ENCODE measurements at regions of chr1 and their contacts with region 1.

Region 1: GRCh38 chr1:202968840-202969295 is 1.8 kb upstream of the CYB5R1 start:
- DNase-seq: peak in 8 of 14 experiments; percentile 5 to 78 (median 24)
- ATAC-seq: peak; percentile 45
- H3K4me3 ChIP-seq: no peak overlapping the region
- H3K4me3 Mint-ChIP-seq: peak overlapping the region; percentile 94
- H3K27ac ChIP-seq: no peak overlapping the region
- H3K27ac Mint-ChIP-seq: peak overlapping the region; percentile 90
- H3K4me1 ChIP-seq: peaks cover 36% of the 10 kb centered on the region
- H3K4me1 Mint-ChIP-seq: peaks cover 27% of the 10 kb centered on the region
- H3K27me3 ChIP-seq: no peaks in the 10 kb centered on the region
- H3K27me3 Mint-ChIP-seq: no peaks in the 10 kb centered on the region
- CTCF ChIP-seq: peak; percentile 47

Region 2: GRCh38 chr1:202810615-202811295 is 158.1 kb before region 1 on chr1 and contains the start of gene PCAT6:
- CTCF ChIA-PET with region 1: no interaction called
- POLR2A ChIA-PET with region 1: no interaction called
- intact Hi-C with region 1: loop called in 1 of 2 experiments (anchors 2 kb)
- DNase-seq: peak; percentile 67 to 93 (median 81)
- ATAC-seq: peak; percentile 67
- H3K4me3 ChIP-seq: peak within 1 kb of the TSS; percentile 96
- H3K4me3 Mint-ChIP-seq: peak within 1 kb of the TSS; percentile 90
- H3K27ac ChIP-seq: peak within 1 kb of the TSS in 1 of 2 donors; percentile 35
- H3K27ac Mint-ChIP-seq: peak within 1 kb of the TSS; percentile 80
- H3K4me1 ChIP-seq: peaks cover 33% of the 10 kb centered on the region
- H3K4me1 Mint-ChIP-seq: peaks cover 38% of the 10 kb centered on the region
- H3K27me3 ChIP-seq: no peaks in the 10 kb centered on the region
- H3K27me3 Mint-ChIP-seq: no peaks in the 10 kb centered on the region
- CTCF ChIP-seq: no peak
- total RNA-seq, gene PCAT6: 0.91 to 1.3 TPM

Region 3: GRCh38 chr1:202871366-202871765 is 97.5 kb before region 1 on chr1:
- CTCF ChIA-PET with region 1: no interaction called
- POLR2A ChIA-PET with region 1: no interaction called
- intact Hi-C with region 1: no loop called
- DNase-seq: no peak
- ATAC-seq: no peak
- H3K4me3 ChIP-seq: no peak overlapping the region
- H3K4me3 Mint-ChIP-seq: no peak overlapping the region
- H3K27ac ChIP-seq: no peak overlapping the region
- H3K27ac Mint-ChIP-seq: no peak overlapping the region
- H3K4me1 ChIP-seq: no peaks in the 10 kb centered on the region
- H3K4me1 Mint-ChIP-seq: no peaks in the 10 kb centered on the region
- H3K27me3 ChIP-seq: peaks cover 0 to 1% of the 10 kb centered on the region in 2 experiments
- H3K27me3 Mint-ChIP-seq: peaks cover 15% of the 10 kb centered on the region
- CTCF ChIP-seq: no peak

Region 4: DNA sequence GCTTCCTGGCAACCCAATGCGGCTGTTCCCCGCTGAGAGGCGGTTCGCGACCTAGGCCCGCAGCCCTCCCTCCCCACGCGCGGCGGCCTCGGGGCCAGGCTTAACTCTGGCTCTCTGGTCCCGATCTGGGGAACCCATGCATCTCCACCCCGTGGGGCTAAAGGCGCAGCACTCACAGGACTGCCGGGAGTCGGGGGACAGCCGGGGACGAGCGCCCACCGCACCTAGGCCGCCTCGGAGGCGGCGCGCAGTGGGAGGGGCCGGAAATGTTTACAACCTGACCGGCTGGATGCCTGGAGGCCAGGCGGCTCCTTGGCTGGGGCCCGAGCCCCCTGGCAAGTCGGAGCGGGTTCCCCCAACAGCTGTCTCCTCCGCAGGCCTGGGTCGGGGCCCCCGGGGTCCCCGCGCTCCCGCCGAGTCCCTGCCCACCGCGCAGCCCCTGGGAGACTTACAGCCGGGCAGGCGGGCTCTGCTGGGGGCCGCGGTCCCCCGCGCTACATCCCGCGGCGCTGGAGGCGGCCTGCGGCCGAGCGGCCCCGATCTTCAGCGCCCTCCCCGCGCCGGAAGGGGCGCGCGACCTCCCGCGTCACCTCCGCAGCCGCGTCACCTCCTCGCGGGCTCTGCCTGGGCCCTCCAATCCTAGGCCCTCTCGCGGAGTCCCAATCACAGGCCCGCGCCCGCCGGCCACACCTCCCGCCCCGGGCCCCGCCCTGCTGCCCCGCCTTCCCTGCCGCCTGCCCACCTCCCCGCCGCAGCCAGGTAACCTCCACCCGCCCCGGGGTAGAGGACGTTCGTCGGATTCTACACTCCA is 10.9 kb before region 1 on chr1 and contains the start of gene ADIPOR1:
- CTCF ChIA-PET with region 1: interaction called, 4 read pairs
- POLR2A ChIA-PET with region 1: interaction called, 6 read pairs
- intact Hi-C with region 1: loop called in 1 of 2 experiments (anchors 1 kb)
- DNase-seq: peak; percentile 88 to 97 (median 95)
- ATAC-seq: peak; percentile 96
- H3K4me3 ChIP-seq: peak within 1 kb of the TSS; percentile 98
- H3K4me3 Mint-ChIP-seq: peak within 1 kb of the TSS; percentile 98
- H3K27ac ChIP-seq: peak within 1 kb of the TSS; percentile 81
- H3K27ac Mint-ChIP-seq: peak within 1 kb of the TSS; percentile 95
- H3K4me1 ChIP-seq: peaks cover 38% of the 10 kb centered on the region
- H3K4me1 Mint-ChIP-seq: peaks cover 55% of the 10 kb centered on the region
- H3K27me3 ChIP-seq: no peaks in the 10 kb centered on the region
- H3K27me3 Mint-ChIP-seq: no peaks in the 10 kb centered on the region
- CTCF ChIP-seq: peak; percentile 22
- total RNA-seq, gene ADIPOR1: 91.5 to 95.6 TPM

Region 5: GRCh38 chr1:203006948-203007871 is 38.3 kb after region 1 on chr1 and contains the start of gene TMEM183A:
- CTCF ChIA-PET with region 1: interaction called, 3 read pairs
- POLR2A ChIA-PET with region 1: interaction called, 14 read pairs
- intact Hi-C with region 1: loop called in 1 of 2 experiments (anchors 2 kb)
- DNase-seq: peak; percentile 88 to 98 (median 92)
- ATAC-seq: peak; percentile 94
- H3K4me3 ChIP-seq: peak within 1 kb of the TSS; percentile 71
- H3K4me3 Mint-ChIP-seq: peak within 1 kb of the TSS; percentile 99
- H3K27ac ChIP-seq: peak within 1 kb of the TSS; percentile 71 to 96
- H3K27ac Mint-ChIP-seq: peak within 1 kb of the TSS; percentile 95
- H3K4me1 ChIP-seq: peaks cover 19% of the 10 kb centered on the region
- H3K4me1 Mint-ChIP-seq: peaks cover 35% of the 10 kb centered on the region
- H3K27me3 ChIP-seq: no peaks in the 10 kb centered on the region
- H3K27me3 Mint-ChIP-seq: no peaks in the 10 kb centered on the region
- CTCF ChIP-seq: no peak
- total RNA-seq, gene TMEM183A: 187 to 194 TPM

Region 6: GRCh38 chr1:203084588-203085502 is 116.0 kb after region 1 on chr1:
- CTCF ChIA-PET with region 1: no interaction called
- POLR2A ChIA-PET with region 1: no interaction called
- intact Hi-C with region 1: no loop called
- DNase-seq: no peak
- ATAC-seq: no peak
- H3K4me3 ChIP-seq: no peak overlapping the region
- H3K4me3 Mint-ChIP-seq: no peak overlapping the region
- H3K27ac ChIP-seq: no peak overlapping the region
- H3K27ac Mint-ChIP-seq: no peak overlapping the region
- H3K4me1 ChIP-seq: no peaks in the 10 kb centered on the region
- H3K4me1 Mint-ChIP-seq: no peaks in the 10 kb centered on the region
- H3K27me3 ChIP-seq: peaks cover 0 to 10% of the 10 kb centered on the region in 2 experiments
- H3K27me3 Mint-ChIP-seq: peaks cover 18% of the 10 kb centered on the region
- CTCF ChIP-seq: no peak

Region 7: DNA sequence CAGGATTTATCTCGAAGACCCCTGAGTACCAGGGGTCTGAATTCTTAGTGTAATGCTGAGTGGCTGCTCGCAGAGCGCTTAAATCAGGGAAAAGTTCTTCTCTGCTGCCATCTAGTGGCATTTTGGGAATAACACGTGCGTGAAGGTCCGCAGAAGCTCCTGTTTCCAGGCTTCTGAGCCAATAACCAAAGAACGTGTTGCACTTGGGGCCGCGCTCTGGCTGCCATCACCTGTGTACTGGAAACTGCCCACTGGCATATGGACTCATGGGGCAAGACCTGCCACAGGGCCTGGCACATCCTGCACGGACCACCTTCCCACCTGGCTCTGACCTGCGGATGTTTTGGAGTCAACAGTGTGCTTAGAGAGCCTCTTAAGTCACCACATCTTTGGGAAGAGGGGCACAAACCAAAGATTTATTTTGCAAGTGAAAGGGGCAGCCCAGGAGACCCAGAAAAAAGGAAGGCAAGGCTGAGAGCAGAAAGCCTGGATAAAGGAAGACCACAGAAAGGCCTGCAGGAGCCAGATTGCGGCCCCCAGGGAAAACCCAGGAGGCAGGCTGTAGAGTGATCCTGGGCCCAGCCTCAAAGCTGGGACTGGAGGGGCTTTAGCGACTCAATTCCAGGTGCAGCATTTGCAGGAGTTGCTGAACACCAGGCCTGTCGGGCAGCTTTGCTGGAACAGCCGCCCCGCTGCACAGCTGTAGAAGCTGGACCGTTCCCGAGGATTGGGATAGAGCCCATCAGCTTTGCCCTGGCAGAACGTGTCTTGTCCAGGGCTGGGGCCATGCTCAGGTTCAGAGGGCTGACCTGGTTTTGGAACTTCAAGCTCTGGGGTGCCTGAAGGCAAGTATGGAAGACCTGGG is 247.6 kb after region 1 on chr1:
- CTCF ChIA-PET with region 1: no interaction called
- POLR2A ChIA-PET with region 1: no interaction called
- intact Hi-C with region 1: no loop called
- DNase-seq: peak; percentile 13 to 78 (median 39)
- ATAC-seq: peak; percentile 68
- H3K4me3 ChIP-seq: no peak overlapping the region
- H3K4me3 Mint-ChIP-seq: no peak overlapping the region
- H3K27ac ChIP-seq: no peak overlapping the region
- H3K27ac Mint-ChIP-seq: no peak overlapping the region
- H3K4me1 ChIP-seq: peaks cover 7% of the 10 kb centered on the region
- H3K4me1 Mint-ChIP-seq: peaks cover 6% of the 10 kb centered on the region
- H3K27me3 ChIP-seq: peaks cover 0 to 8% of the 10 kb centered on the region in 2 experiments
- H3K27me3 Mint-ChIP-seq: peaks cover 16% of the 10 kb centered on the region
- CTCF ChIP-seq: peak; percentile 81

Measured in CD4-positive, alpha-beta T cell (primary cell).